T-cell (primary cell): ENCODE measurements at regions of chr17 and their contacts with region 1.

Region 1: GRCh38 chr17:42142371-42142896 is 12.4 kb downstream of the RAB5C start:
- DNase-seq: no peak
- ATAC-seq: no peak
- H3K4me3 ChIP-seq: no peak overlapping the region
- H3K4me3 Mint-ChIP-seq: no peak overlapping the region
- H3K27ac ChIP-seq: no peak overlapping the region
- H3K27ac Mint-ChIP-seq: no peak overlapping the region
- H3K4me1 ChIP-seq: peaks cover 0 to 32% of the 10 kb centered on the region in 2 experiments
- H3K4me1 Mint-ChIP-seq: peaks cover 20 to 64% (median 61%) of the 10 kb centered on the region in 3 donors
- H3K27me3 ChIP-seq: no peaks in the 10 kb centered on the region
- H3K27me3 Mint-ChIP-seq: no peaks in the 10 kb centered on the region

Region 2: GRCh38 chr17:41885733-41886132 is 256.7 kb before region 1 on chr17:
- CTCF ChIA-PET with region 1: no interaction called
- POLR2A ChIA-PET with region 1: no interaction called
- DNase-seq: peak in 1 of 35 experiments; percentile 26
- ATAC-seq: no peak
- H3K4me3 ChIP-seq: no peak overlapping the region
- H3K4me3 Mint-ChIP-seq: no peak overlapping the region
- H3K27ac ChIP-seq: no peak overlapping the region
- H3K27ac Mint-ChIP-seq: no peak overlapping the region
- H3K4me1 ChIP-seq: no peaks in the 10 kb centered on the region
- H3K4me1 Mint-ChIP-seq: no peaks in the 10 kb centered on the region
- H3K27me3 ChIP-seq: no peaks in the 10 kb centered on the region
- H3K27me3 Mint-ChIP-seq: no peaks in the 10 kb centered on the region

Region 3: DNA sequence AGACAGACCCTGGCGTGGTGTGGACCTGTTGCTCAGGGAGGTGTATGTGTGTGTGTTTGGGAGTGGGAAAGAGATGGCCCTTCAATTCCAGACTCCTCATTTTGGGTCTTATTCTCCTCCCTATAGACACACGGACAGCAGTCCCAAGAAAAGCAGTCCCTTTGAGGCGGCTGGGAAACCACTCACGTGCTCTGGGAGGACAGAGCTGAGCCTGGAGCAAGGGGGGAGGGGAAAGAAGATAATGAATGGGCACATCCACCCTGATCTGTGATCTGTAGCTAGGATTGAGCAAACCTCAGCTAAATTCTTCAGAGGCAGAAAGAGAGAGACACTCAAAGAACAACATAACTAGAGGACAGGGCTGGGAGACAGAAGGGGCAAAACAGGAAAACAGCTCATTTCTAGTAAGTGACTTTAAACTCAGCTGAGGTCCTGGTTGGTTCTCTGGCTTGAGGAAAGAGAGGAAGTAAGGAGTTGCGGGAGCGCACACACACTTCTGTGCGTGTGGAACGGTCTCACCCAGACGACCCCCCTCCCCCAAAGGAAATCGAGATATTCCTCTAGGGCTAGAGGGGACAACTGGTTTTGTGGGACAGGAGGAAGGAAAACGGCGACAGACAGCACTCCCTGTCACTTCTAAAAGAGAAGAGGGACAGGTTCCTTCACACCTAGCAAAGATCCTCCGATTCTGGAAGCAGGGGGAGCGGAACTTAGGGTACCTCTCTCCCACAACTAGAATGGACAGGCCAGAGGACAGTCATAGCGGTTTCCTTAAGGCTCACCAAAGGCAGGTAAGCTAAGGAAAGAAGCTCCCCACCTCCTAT is 11.7 kb after region 1 on chr17:
- CTCF ChIA-PET with region 1: interaction called in 1 of 2 experiments, 3 read pairs
- POLR2A ChIA-PET with region 1: interaction called, 6 to 13 read pairs
- DNase-seq: peak in 2 of 35 experiments; percentile 10 to 21
- ATAC-seq: no peak
- H3K4me3 ChIP-seq: peak overlapping the region; percentile 84 to 96
- H3K4me3 Mint-ChIP-seq: peak overlapping the region; percentile 88 to 94 (median 92)
- H3K27ac ChIP-seq: peak overlapping the region; percentile 74
- H3K27ac Mint-ChIP-seq: peak overlapping the region; percentile 91 to 92
- H3K4me1 ChIP-seq: peaks cover 11 to 37% of the 10 kb centered on the region in 2 experiments
- H3K4me1 Mint-ChIP-seq: peaks cover 28 to 45% (median 44%) of the 10 kb centered on the region in 3 donors
- H3K27me3 ChIP-seq: no peaks in the 10 kb centered on the region
- H3K27me3 Mint-ChIP-seq: no peaks in the 10 kb centered on the region

Region 4: DNA sequence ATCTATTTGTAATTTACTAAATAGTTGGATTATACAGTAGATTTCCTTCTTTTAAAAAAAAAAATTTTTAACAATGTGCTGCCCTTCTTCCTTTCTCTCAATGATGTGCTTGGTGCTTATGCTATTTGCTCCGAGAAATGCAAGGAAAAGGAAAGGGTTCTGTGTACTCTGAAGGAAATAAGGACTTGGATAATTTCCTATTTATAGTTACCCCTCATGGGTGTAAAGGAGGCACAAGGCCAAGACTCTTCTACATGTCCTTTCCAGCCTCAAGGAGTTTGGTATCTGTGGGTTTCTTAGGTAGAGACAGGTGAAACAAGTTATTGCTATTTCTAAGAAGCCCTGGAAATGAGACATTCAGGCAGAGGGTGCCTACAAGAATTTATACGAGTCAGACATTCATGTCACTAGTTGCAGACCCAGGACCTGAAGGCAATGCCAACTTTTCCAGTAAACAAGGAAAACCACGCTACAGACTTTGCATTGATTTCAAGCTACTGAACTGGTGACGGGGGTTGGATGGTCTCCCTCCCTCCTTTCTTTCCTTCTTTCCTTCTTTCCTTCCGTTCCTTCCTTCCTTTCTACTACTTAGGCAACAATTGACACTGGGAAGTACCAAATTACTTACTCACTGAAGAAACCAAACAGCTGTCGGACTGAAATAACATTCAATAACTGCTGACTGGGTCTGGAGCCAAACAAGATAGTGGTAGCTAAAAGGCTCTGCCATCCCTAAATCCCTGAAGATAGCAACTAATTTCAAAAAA is 85.6 kb after region 1 on chr17:
- CTCF ChIA-PET with region 1: no interaction called
- POLR2A ChIA-PET with region 1: no interaction called
- DNase-seq: no peak
- ATAC-seq: no peak
- H3K4me3 ChIP-seq: no peak overlapping the region
- H3K4me3 Mint-ChIP-seq: no peak overlapping the region
- H3K27ac ChIP-seq: no peak overlapping the region
- H3K27ac Mint-ChIP-seq: peak overlapping the region in 1 of 2 donors; percentile 4
- H3K4me1 ChIP-seq: peaks cover 0 to 4% of the 10 kb centered on the region in 2 experiments
- H3K4me1 Mint-ChIP-seq: peaks cover 12 to 24% (median 23%) of the 10 kb centered on the region in 3 donors
- H3K27me3 ChIP-seq: no peaks in the 10 kb centered on the region
- H3K27me3 Mint-ChIP-seq: no peaks in the 10 kb centered on the region